Activated CD4-positive, alpha-beta T cell treated with anti-CD3 and anti-CD28 coated beads for 36 hours (primary cell): ENCODE measurements at regions of chr18 and their contacts with region 1.

Region 1: GRCh38 chr18:59823596-59824195 is 76.1 kb upstream of the PMAIP1 start:
- DNase-seq: peak; percentile 76
- ATAC-seq: peak; percentile 55
- H3K4me3 Mint-ChIP-seq: no peak overlapping the region
- H3K27ac Mint-ChIP-seq: no peak overlapping the region
- H3K4me1 Mint-ChIP-seq: no peaks in the 10 kb centered on the region
- H3K27me3 Mint-ChIP-seq: peaks cover 10% of the 10 kb centered on the region

Region 2: GRCh38 chr18:59308248-59308937 is 515.3 kb before region 1 on chr18:
- CTCF ChIA-PET with region 1: no interaction called
- POLR2A ChIA-PET with region 1: no interaction called
- intact Hi-C with region 1: loop called in 1 of 2 experiments (anchors 5 kb)
- DNase-seq: peak; percentile 82
- ATAC-seq: peak; percentile 95
- H3K4me3 Mint-ChIP-seq: peak overlapping the region; percentile 20
- H3K27ac Mint-ChIP-seq: no peak overlapping the region
- H3K4me1 Mint-ChIP-seq: no peaks in the 10 kb centered on the region
- H3K27me3 Mint-ChIP-seq: peaks cover 42% of the 10 kb centered on the region

Region 3: GRCh38 chr18:59459369-59460079 is 364.2 kb before region 1 on chr18:
- CTCF ChIA-PET with region 1: interaction called, 54 read pairs
- POLR2A ChIA-PET with region 1: no interaction called
- intact Hi-C with region 1: loop called (anchors 1 to 5 kb)
- DNase-seq: no peak
- ATAC-seq: no peak
- H3K4me3 Mint-ChIP-seq: no peak overlapping the region
- H3K27ac Mint-ChIP-seq: no peak overlapping the region
- H3K4me1 Mint-ChIP-seq: no peaks in the 10 kb centered on the region
- H3K27me3 Mint-ChIP-seq: peaks cover 17% of the 10 kb centered on the region

Region 4: GRCh38 chr18:59617468-59617932 is 206.2 kb before region 1 on chr18:
- CTCF ChIA-PET with region 1: no interaction called
- POLR2A ChIA-PET with region 1: no interaction called
- intact Hi-C with region 1: no loop called
- DNase-seq: no peak
- ATAC-seq: no peak
- H3K4me3 Mint-ChIP-seq: no peak overlapping the region
- H3K27ac Mint-ChIP-seq: no peak overlapping the region
- H3K4me1 Mint-ChIP-seq: no peaks in the 10 kb centered on the region
- H3K27me3 Mint-ChIP-seq: peaks cover 6% of the 10 kb centered on the region

Region 5: GRCh38 chr18:59631583-59632181 is 192.0 kb before region 1 on chr18:
- CTCF ChIA-PET with region 1: interaction called, 11 read pairs
- POLR2A ChIA-PET with region 1: no interaction called
- intact Hi-C with region 1: loop called in 1 of 2 experiments (anchors 1 kb)
- DNase-seq: peak; percentile 15
- ATAC-seq: no peak
- H3K4me3 Mint-ChIP-seq: no peak overlapping the region
- H3K27ac Mint-ChIP-seq: no peak overlapping the region
- H3K4me1 Mint-ChIP-seq: no peaks in the 10 kb centered on the region
- H3K27me3 Mint-ChIP-seq: peaks cover 9% of the 10 kb centered on the region

Region 6: DNA sequence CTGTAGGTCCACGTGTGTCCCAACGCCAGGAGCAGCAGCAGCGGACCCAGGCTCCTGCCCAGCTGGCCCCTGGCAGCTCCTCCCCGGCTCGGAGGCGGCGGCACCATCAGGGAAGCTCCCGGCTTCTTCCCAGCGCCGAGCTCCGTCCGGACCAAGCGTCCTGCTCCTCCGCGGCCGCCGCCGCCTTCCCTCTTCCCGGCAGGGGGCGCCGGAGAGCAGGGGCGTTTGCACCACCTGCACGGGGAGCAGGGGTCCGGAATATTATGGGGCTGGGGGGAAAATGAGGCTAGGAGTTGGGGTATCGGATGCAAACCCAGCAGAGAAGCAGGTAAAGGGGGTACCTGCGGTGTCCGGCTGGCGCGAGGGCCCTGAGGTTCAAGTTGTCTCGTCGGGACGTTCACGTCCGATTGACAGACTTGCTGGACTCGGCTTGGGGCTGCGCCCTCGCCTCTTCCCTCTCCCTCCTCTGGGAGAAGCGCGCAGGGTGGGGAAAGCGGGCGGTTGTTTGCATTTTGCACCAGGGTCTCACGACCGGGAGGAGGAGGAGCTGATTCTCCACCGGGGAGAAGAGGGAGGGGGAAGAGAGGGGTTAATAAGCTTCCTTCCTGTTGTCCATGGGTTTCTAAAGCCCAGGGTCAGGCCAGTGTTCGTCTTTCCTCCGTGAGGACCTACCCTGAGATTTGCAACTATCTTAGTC is 126.3 kb before region 1 on chr18 and contains the start of gene CCBE1:
- CTCF ChIA-PET with region 1: interaction called, 18 read pairs
- POLR2A ChIA-PET with region 1: no interaction called
- intact Hi-C with region 1: loop called (anchors 2 to 5 kb)
- DNase-seq: peak; percentile 77
- ATAC-seq: peak; percentile 53
- H3K4me3 Mint-ChIP-seq: no peak within 1 kb of the TSS
- H3K27ac Mint-ChIP-seq: no peak within 1 kb of the TSS
- H3K4me1 Mint-ChIP-seq: peaks cover 8% of the 10 kb centered on the region
- H3K27me3 Mint-ChIP-seq: peaks cover 46% of the 10 kb centered on the region
- total RNA-seq, gene CCBE1: 0.14 TPM in 1 of 2 experiments, not detected in the other

Region 7: GRCh38 chr18:59783138-59783537 is 40.6 kb before region 1 on chr18:
- CTCF ChIA-PET with region 1: interaction called, 17 read pairs
- POLR2A ChIA-PET with region 1: no interaction called
- intact Hi-C with region 1: loop called in 1 of 2 experiments (anchors 1 kb)
- DNase-seq: peak; percentile 46
- ATAC-seq: no peak
- H3K4me3 Mint-ChIP-seq: no peak overlapping the region
- H3K27ac Mint-ChIP-seq: no peak overlapping the region
- H3K4me1 Mint-ChIP-seq: no peaks in the 10 kb centered on the region
- H3K27me3 Mint-ChIP-seq: peaks cover 6% of the 10 kb centered on the region

Region 8: DNA sequence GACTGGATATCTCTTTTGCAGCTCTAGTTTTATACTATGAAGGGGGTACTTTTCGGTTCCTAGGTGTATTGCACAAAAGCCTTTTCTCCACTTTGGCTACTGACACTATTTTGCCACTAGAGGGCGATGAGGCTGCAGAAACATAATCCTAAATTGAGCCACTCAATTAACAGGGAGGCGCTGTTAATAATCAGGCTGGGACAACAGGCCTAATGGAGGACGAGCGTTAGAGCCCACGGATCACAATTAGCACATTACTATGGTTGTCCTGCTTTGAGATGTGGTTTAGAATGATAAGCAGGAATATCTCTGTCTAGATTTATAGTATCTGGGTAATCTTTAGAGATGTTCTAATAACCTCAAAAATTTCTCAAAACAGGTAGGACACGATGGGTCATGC is 13.9 kb after region 1 on chr18:
- CTCF ChIA-PET with region 1: interaction called, 12 read pairs
- POLR2A ChIA-PET with region 1: no interaction called
- intact Hi-C with region 1: no loop called
- DNase-seq: peak; percentile 56
- ATAC-seq: peak; percentile 60
- H3K4me3 Mint-ChIP-seq: no peak overlapping the region
- H3K27ac Mint-ChIP-seq: no peak overlapping the region
- H3K4me1 Mint-ChIP-seq: peaks cover 10% of the 10 kb centered on the region
- H3K27me3 Mint-ChIP-seq: peaks cover 5% of the 10 kb centered on the region